ENCODE measurements at regions of chr19 and their contacts with region 1.

Region 1: GRCh38 chr19:55160128-55160985 is 2.8 kb upstream of the TNNI3 start:
- DNase-seq: peak; percentile 65 to 93 (median 82)
- ATAC-seq: peak; percentile 98
- H3K4me3 ChIP-seq: no peak overlapping the region
- H3K4me3 Mint-ChIP-seq: no peak overlapping the region
- H3K27ac ChIP-seq: no peak overlapping the region
- H3K27ac Mint-ChIP-seq: no peak overlapping the region
- H3K4me1 ChIP-seq: peaks cover 22% of the 10 kb centered on the region
- H3K4me1 Mint-ChIP-seq: peaks cover 11% of the 10 kb centered on the region
- H3K27me3 ChIP-seq: peaks cover 64 to 74% of the 10 kb centered on the region in 2 experiments
- H3K27me3 Mint-ChIP-seq: peaks cover 69% of the 10 kb centered on the region
- CTCF ChIP-seq: peak; percentile 85

Region 2: GRCh38 chr19:55088543-55089341 is 71.6 kb before region 1 on chr19:
- CTCF ChIA-PET with region 1: interaction called, 7 read pairs
- POLR2A ChIA-PET with region 1: no interaction called
- intact Hi-C with region 1: loop called (anchors 1 to 5 kb)
- DNase-seq: peak; percentile 62 to 83 (median 73)
- ATAC-seq: peak; percentile 61
- H3K4me3 ChIP-seq: no peak overlapping the region
- H3K4me3 Mint-ChIP-seq: peak overlapping the region; percentile 49
- H3K27ac ChIP-seq: no peak overlapping the region
- H3K27ac Mint-ChIP-seq: no peak overlapping the region
- H3K4me1 ChIP-seq: peaks cover 23% of the 10 kb centered on the region
- H3K4me1 Mint-ChIP-seq: peaks cover 30% of the 10 kb centered on the region
- H3K27me3 ChIP-seq: peaks cover 32 to 42% of the 10 kb centered on the region in 2 experiments
- H3K27me3 Mint-ChIP-seq: peaks cover 54% of the 10 kb centered on the region
- CTCF ChIP-seq: peak; percentile 93

Region 3: GRCh38 chr19:55141696-55142095 is 18.7 kb before region 1 on chr19:
- CTCF ChIA-PET with region 1: interaction called, 16 read pairs
- POLR2A ChIA-PET with region 1: no interaction called
- intact Hi-C with region 1: no loop called
- DNase-seq: no peak
- ATAC-seq: no peak
- H3K4me3 ChIP-seq: no peak overlapping the region
- H3K4me3 Mint-ChIP-seq: no peak overlapping the region
- H3K27ac ChIP-seq: no peak overlapping the region
- H3K27ac Mint-ChIP-seq: no peak overlapping the region
- H3K4me1 ChIP-seq: peaks cover 20% of the 10 kb centered on the region
- H3K4me1 Mint-ChIP-seq: peaks cover 5% of the 10 kb centered on the region
- H3K27me3 ChIP-seq: peaks cover 50 to 58% of the 10 kb centered on the region in 2 experiments
- H3K27me3 Mint-ChIP-seq: peaks cover 59% of the 10 kb centered on the region
- CTCF ChIP-seq: no peak